Heart left ventricle (tissue), 16 donors: ENCODE measurements at regions of chrX and their contacts with region 1.

Region 1: DNA sequence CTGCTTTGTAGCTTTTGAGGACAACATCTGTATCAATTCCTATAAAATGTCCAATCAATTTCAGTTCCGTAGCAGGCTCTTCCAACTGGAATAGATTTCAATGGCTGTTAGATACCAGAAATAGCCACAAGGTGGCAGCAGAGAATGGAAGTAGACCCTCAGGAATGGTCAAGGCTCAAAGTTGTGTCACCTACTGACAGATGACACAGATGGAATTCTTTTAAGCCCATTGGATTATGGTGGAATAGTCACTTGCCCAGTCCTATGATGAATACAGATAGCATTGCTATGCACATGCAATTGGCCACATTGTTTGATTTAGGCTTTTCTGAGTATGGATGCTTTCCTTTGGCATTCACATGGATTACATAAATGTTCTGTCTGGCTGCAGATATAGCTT is 130.4 kb upstream of the RADX start:
- DNase-seq: peak in 3 of 5 donors; percentile 15 to 21 (median 19)
- ATAC-seq: peak in 3 of 4 donors; percentile 26 to 71 (median 33)
- H3K4me3 ChIP-seq: no peak overlapping the region
- H3K27ac ChIP-seq: no peak overlapping the region
- H3K4me1 ChIP-seq: no peaks in the 10 kb centered on the region
- H3K27me3 ChIP-seq: peaks cover 0 to 4% (median 0%) of the 10 kb centered on the region in 9 donors
- CTCF ChIP-seq: peak; percentile 44 to 81 (median 65)
- POLR2A ChIP-seq: no peak

Region 2: GRCh38 chrX:106791495-106791894 is 310.2 kb after region 1 on chrX:
- intact Hi-C with region 1: loop called (anchors 2 to 10 kb)
- DNase-seq: no peak
- ATAC-seq: no peak
- H3K4me3 ChIP-seq: no peak overlapping the region
- H3K27ac ChIP-seq: no peak overlapping the region
- H3K4me1 ChIP-seq: no peaks in the 10 kb centered on the region
- H3K27me3 ChIP-seq: peaks cover 0 to 13% (median 0%) of the 10 kb centered on the region in 9 donors
- CTCF ChIP-seq: peak in 9 of 12 donors; percentile 14 to 42 (median 37)
- POLR2A ChIP-seq: no peak